ENCODE measurements at regions of chr11 and their contacts with region 1.

Region 1: GRCh38 chr11:33531743-33532181 is 168.9 kb downstream of the C11orf91 start:
- DNase-seq: no peak
- ATAC-seq: no peak
- H3K4me3 ChIP-seq: no peak overlapping the region
- H3K27ac ChIP-seq: no peak overlapping the region
- H3K4me1 ChIP-seq: peaks cover 15% of the 10 kb centered on the region
- H3K27me3 ChIP-seq: peaks cover 0 to 4% of the 10 kb centered on the region in 2 experiments; a peak in 1 of 5 replicates
- CTCF ChIP-seq: no peak
- EP300 ChIP-seq: no peak
- POLR2A ChIP-seq: no peak
- RAD21 ChIP-seq: no peak

Region 2: GRCh38 chr11:33520112-33520511 is 11.7 kb before region 1 on chr11:
- CTCF ChIA-PET with region 1: no interaction called
- POLR2A ChIA-PET with region 1: no interaction called
- in situ Hi-C with region 1: no loop called
- intact Hi-C with region 1: no loop called
- DNase-seq: no peak
- ATAC-seq: no peak
- H3K4me3 ChIP-seq: no peak overlapping the region
- H3K27ac ChIP-seq: no peak overlapping the region
- H3K4me1 ChIP-seq: no peaks in the 10 kb centered on the region
- H3K27me3 ChIP-seq: no peaks in the 10 kb centered on the region; a peak in 1 of 5 replicates
- CTCF ChIP-seq: no peak
- EP300 ChIP-seq: no peak
- POLR2A ChIP-seq: no peak
- RAD21 ChIP-seq: no peak

Region 3: GRCh38 chr11:33542921-33543320 is 11.2 kb after region 1 on chr11:
- CTCF ChIA-PET with region 1: no interaction called
- POLR2A ChIA-PET with region 1: no interaction called
- in situ Hi-C with region 1: no loop called
- intact Hi-C with region 1: no loop called
- DNase-seq: peak; percentile 23
- ATAC-seq: peak; percentile 84
- H3K4me3 ChIP-seq: no peak overlapping the region
- H3K27ac ChIP-seq: no peak overlapping the region
- H3K4me1 ChIP-seq: no peaks in the 10 kb centered on the region
- H3K27me3 ChIP-seq: peaks cover 0 to 40% of the 10 kb centered on the region in 2 experiments; a peak in 3 of 5 replicates
- CTCF ChIP-seq: peak; percentile 68
- EP300 ChIP-seq: no peak
- POLR2A ChIP-seq: no peak
- RAD21 ChIP-seq: 0 out of 2 replicates have a peak, but pooled peaks have one; percentile 20

Region 4: DNA sequence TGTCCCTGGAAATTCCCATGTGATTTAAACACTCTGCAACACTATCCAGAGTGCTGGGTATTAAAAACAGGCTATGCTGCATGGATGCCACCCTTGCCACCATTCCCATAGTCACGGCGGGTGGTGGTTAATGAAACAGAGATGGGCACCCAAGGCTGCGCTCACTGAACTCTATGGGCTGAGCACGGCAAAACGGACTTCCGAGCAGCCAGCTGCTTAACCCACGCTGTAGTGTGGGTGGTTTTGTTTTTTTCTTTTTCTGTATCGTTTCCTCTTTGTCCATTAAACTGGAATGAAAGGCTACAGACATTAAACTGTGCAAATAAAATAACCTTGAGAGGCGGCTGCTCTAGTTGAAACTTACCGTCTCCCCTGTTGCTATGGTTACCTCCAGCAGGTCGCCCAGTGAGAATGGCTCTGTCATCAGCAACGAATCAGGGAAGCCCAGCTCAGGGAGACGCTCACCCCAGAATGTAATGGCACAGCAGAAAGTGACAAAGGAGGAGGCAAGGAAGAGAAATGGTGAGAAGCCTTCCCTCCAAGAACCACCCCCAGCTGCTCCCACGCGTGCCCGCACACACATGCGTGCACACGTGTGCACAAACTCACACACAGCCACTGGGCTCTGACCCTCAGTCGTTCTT is 66.8 kb after region 1 on chr11:
- CTCF ChIA-PET with region 1: no interaction called
- POLR2A ChIA-PET with region 1: no interaction called
- in situ Hi-C with region 1: no loop called
- intact Hi-C with region 1: no loop called
- DNase-seq: no peak
- ATAC-seq: no peak
- H3K4me3 ChIP-seq: no peak overlapping the region
- H3K27ac ChIP-seq: no peak overlapping the region
- H3K4me1 ChIP-seq: no peaks in the 10 kb centered on the region
- H3K27me3 ChIP-seq: peaks cover 0 to 23% of the 10 kb centered on the region in 2 experiments; a peak in 3 of 5 replicates
- CTCF ChIP-seq: no peak
- EP300 ChIP-seq: no peak
- POLR2A ChIP-seq: no peak
- RAD21 ChIP-seq: no peak

Region 5: DNA sequence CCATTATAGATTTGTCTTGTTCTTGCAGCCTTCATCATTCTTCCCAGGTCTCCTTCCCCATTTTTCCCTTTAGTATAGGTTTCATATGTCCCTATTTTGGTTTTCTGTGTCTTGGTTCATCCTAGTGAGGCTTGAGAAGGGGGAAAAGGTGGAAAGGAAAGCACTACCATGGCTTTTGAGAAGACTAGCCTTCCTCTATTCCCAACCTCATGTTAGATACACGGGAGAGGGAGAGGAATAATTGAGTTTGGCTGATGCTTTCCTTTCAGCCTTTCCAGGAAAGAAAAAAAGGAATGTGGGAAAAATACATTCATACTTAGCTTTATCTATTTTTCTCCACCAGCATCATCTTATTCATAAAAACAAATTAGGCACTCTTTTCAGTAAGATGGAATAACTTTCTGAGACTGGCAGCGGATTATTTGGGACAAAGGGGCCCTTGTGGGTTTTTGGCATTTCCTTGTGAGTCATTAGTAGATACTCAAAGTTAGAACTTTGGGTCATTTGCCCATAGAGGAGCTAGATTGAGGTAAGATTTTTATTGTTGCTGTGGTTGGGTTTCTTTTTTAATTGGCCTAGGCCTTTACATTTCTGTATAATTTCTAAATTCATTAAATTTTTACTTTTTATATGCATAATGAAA is 543.5 kb after region 1 on chr11:
- CTCF ChIA-PET with region 1: no interaction called
- POLR2A ChIA-PET with region 1: no interaction called
- in situ Hi-C with region 1: no loop called
- intact Hi-C with region 1: loop called (anchors 5 kb)
- DNase-seq: no peak
- ATAC-seq: no peak
- H3K4me3 ChIP-seq: no peak overlapping the region
- H3K27ac ChIP-seq: no peak overlapping the region
- H3K4me1 ChIP-seq: no peaks in the 10 kb centered on the region
- H3K27me3 ChIP-seq: no peaks in the 10 kb centered on the region
- CTCF ChIP-seq: no peak
- EP300 ChIP-seq: no peak
- POLR2A ChIP-seq: no peak
- RAD21 ChIP-seq: no peak